ENCODE measurements at regions of chr19 and their contacts with region 1.

Region 1: DNA sequence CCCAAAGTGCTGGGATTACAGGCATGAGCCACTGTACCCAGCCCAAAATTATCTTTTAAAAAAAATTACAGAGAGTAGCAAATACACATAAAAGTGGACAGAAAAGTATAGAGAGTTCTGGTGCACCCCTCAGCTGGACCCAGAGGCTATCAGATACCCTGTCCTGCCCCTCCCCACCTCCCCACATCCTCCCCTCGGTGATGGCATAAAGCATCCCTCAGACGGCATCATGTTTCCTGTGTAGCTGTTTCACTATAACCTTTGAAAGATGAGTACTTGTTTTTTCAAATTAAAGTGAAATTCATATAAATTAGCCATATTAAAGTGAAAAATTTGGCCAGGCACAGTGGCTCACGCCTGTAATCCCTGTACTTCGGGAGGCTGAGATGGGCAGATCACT is 20.1 kb downstream of the SLC27A1 start:
- DNase-seq: no peak
- H3K4me3 ChIP-seq: no peak overlapping the region
- H3K4me3 Mint-ChIP-seq: no peak overlapping the region
- H3K27ac Mint-ChIP-seq: no peak overlapping the region
- H3K4me1 ChIP-seq: no peaks in the 10 kb centered on the region
- H3K4me1 Mint-ChIP-seq: peaks cover 6% of the 10 kb centered on the region
- H3K27me3 ChIP-seq: no peaks in the 10 kb centered on the region
- H3K27me3 Mint-ChIP-seq: no peaks in the 10 kb centered on the region
- CTCF ChIP-seq: no peak

Region 2: GRCh38 chr19:17450264-17451075 is 39.9 kb before region 1 on chr19:
- CTCF ChIA-PET with region 1: no interaction called
- POLR2A ChIA-PET with region 1: no interaction called
- intact Hi-C with region 1: no loop called
- DNase-seq: peak in 1 of 2 experiments; percentile 24
- H3K4me3 ChIP-seq: no peak overlapping the region
- H3K4me3 Mint-ChIP-seq: peak overlapping the region; percentile 54
- H3K27ac Mint-ChIP-seq: no peak overlapping the region
- H3K4me1 ChIP-seq: no peaks in the 10 kb centered on the region
- H3K4me1 Mint-ChIP-seq: no peaks in the 10 kb centered on the region
- H3K27me3 ChIP-seq: no peaks in the 10 kb centered on the region
- H3K27me3 Mint-ChIP-seq: no peaks in the 10 kb centered on the region
- CTCF ChIP-seq: no peak

Region 3: GRCh38 chr19:17565611-17566010 is 75.2 kb after region 1 on chr19:
- CTCF ChIA-PET with region 1: no interaction called
- POLR2A ChIA-PET with region 1: no interaction called
- intact Hi-C with region 1: no loop called
- DNase-seq: no peak
- H3K4me3 ChIP-seq: no peak overlapping the region
- H3K4me3 Mint-ChIP-seq: no peak overlapping the region
- H3K27ac Mint-ChIP-seq: no peak overlapping the region
- H3K4me1 ChIP-seq: no peaks in the 10 kb centered on the region
- H3K4me1 Mint-ChIP-seq: no peaks in the 10 kb centered on the region
- H3K27me3 ChIP-seq: no peaks in the 10 kb centered on the region
- H3K27me3 Mint-ChIP-seq: no peaks in the 10 kb centered on the region
- CTCF ChIP-seq: no peak

Region 4: GRCh38 chr19:17618936-17619335 is 128.5 kb after region 1 on chr19:
- CTCF ChIA-PET with region 1: interaction called, 11 read pairs
- POLR2A ChIA-PET with region 1: no interaction called
- intact Hi-C with region 1: no loop called
- DNase-seq: no peak
- H3K4me3 ChIP-seq: no peak overlapping the region
- H3K4me3 Mint-ChIP-seq: no peak overlapping the region
- H3K27ac Mint-ChIP-seq: no peak overlapping the region
- H3K4me1 ChIP-seq: no peaks in the 10 kb centered on the region
- H3K4me1 Mint-ChIP-seq: no peaks in the 10 kb centered on the region
- H3K27me3 ChIP-seq: no peaks in the 10 kb centered on the region
- H3K27me3 Mint-ChIP-seq: no peaks in the 10 kb centered on the region
- CTCF ChIP-seq: no peak